Activated B cell treated with CpG ODN at 0.5 μM for 24 hours (primary cell): ENCODE measurements at regions of chr2 and their contacts with region 1.

Region 1: GRCh38 chr2:178522950-178523595 is 42.8 kb downstream of the PLEKHA3 start:
- DNase-seq: peak; percentile 63
- ATAC-seq: peak; percentile 99
- H3K4me3 Mint-ChIP-seq: peak overlapping the region; percentile 93
- H3K27ac Mint-ChIP-seq: peak overlapping the region; percentile 84
- H3K4me1 Mint-ChIP-seq: peaks cover 34% of the 10 kb centered on the region
- H3K27me3 Mint-ChIP-seq: no peaks in the 10 kb centered on the region
- CTCF ChIP-seq: no peak

Region 2: GRCh38 chr2:178414266-178415247 is 108.5 kb before region 1 on chr2:
- CTCF ChIA-PET with region 1: no interaction called
- POLR2A ChIA-PET with region 1: no interaction called
- intact Hi-C with region 1: loop called (anchors 1 kb)
- DNase-seq: peak; percentile 58
- ATAC-seq: peak; percentile 75
- H3K4me3 Mint-ChIP-seq: peak overlapping the region; percentile 94
- H3K27ac Mint-ChIP-seq: peak overlapping the region; percentile 89
- H3K4me1 Mint-ChIP-seq: peaks cover 20% of the 10 kb centered on the region
- H3K27me3 Mint-ChIP-seq: no peaks in the 10 kb centered on the region
- CTCF ChIP-seq: no peak

Region 3: GRCh38 chr2:178536037-178536436 is 13.0 kb after region 1 on chr2:
- CTCF ChIA-PET with region 1: no interaction called
- POLR2A ChIA-PET with region 1: interaction called, 3 read pairs
- intact Hi-C with region 1: loop called (anchors 1 kb)
- DNase-seq: no peak
- ATAC-seq: peak; percentile 57
- H3K4me3 Mint-ChIP-seq: no peak overlapping the region
- H3K27ac Mint-ChIP-seq: peak overlapping the region; percentile 60
- H3K4me1 Mint-ChIP-seq: peaks cover 22% of the 10 kb centered on the region
- H3K27me3 Mint-ChIP-seq: no peaks in the 10 kb centered on the region
- CTCF ChIP-seq: no peak

Region 4: GRCh38 chr2:178592655-178593054 is 69.6 kb after region 1 on chr2:
- CTCF ChIA-PET with region 1: no interaction called
- POLR2A ChIA-PET with region 1: no interaction called
- intact Hi-C with region 1: no loop called
- DNase-seq: no peak
- ATAC-seq: no peak
- H3K4me3 Mint-ChIP-seq: no peak overlapping the region
- H3K27ac Mint-ChIP-seq: no peak overlapping the region
- H3K4me1 Mint-ChIP-seq: no peaks in the 10 kb centered on the region
- H3K27me3 Mint-ChIP-seq: no peaks in the 10 kb centered on the region
- CTCF ChIP-seq: no peak

Region 5: GRCh38 chr2:178767094-178768060 is 244.3 kb after region 1 on chr2:
- CTCF ChIA-PET with region 1: no interaction called
- POLR2A ChIA-PET with region 1: no interaction called
- intact Hi-C with region 1: no loop called
- DNase-seq: no peak
- ATAC-seq: no peak
- H3K4me3 Mint-ChIP-seq: no peak overlapping the region
- H3K27ac Mint-ChIP-seq: no peak overlapping the region
- H3K4me1 Mint-ChIP-seq: no peaks in the 10 kb centered on the region
- H3K27me3 Mint-ChIP-seq: no peaks in the 10 kb centered on the region
- CTCF ChIP-seq: no peak